IMR-90 (cell line): ENCODE measurements at regions of chr1 and their contacts with region 1.

Region 1: DNA sequence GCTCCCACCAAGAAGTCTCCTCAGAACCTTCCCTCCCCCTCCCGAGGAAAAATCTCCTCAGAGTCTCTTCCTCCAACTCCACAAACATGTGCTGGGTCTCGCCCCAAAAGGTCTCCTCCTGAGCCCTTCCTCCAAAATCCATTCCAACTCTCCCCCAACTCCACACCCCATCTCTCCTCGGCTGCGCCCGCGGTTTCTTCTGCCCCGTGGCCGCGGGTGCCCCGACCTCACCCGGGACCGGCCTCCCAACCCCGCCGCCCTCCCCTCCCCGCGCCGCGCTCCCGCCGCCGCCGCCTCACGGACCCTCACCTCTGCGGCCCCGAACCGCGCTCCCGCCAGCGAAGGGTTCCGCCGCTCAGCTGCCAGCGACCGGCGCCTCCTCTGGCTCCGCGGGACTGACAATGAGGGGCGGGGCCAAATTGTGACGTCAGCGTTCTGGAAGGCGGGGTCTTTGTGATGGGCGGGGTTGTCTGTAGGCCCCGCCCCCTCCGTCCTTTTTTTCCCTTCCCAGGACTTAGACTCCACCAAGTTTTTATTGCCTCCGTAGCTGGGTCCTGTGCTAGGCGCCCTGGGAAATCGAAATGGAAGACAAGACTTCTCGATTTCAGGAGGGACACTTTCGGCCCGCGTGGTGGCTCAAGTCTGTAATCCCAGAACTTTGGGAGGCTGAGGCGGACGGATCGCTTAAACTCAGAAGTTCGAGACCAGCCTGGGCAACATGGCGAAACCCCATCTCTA is at the start of gene LUZP1:
- DNase-seq: peak; percentile 86
- ATAC-seq: peak; percentile 81
- H3K4me3 ChIP-seq: peak within 1 kb of the TSS; percentile 93
- H3K27ac ChIP-seq: peak within 1 kb of the TSS; percentile 97
- H3K4me1 ChIP-seq: peaks cover 7% of the 10 kb centered on the region
- H3K27me3 ChIP-seq: no peaks in the 10 kb centered on the region
- CTCF ChIP-seq: 0 out of 2 replicates have a peak, but pooled peaks have one; percentile 2
- POLR2A ChIP-seq: peak; percentile 96
- RAD21 ChIP-seq: no peak
- total RNA-seq, gene LUZP1: 31.7 and 36.1 TPM in 2 replicates

Region 2: DNA sequence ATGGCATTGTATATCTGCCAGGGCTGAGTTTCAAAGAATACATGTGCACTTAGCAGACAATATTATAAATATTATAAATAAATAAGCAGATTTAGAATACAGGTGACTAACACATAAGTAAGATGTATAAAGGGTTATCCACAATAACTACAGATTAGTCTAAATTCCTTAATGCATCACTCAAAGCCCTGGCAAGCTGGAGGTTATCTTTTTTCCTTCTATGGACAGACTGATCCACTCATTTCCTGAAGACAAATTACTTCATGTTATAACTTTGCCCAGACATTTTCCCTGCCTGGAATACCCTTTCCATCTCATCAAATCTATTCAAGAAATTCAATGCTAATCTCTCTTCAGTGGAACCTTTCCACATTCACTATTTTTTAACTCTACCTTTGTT is 38.8 kb before region 1 on chr1:
- CTCF ChIA-PET with region 1: no interaction called
- POLR2A ChIA-PET with region 1: no interaction called
- dilution Hi-C with region 1: no loop called
- in situ Hi-C with region 1: no loop called
- intact Hi-C with region 1: loop called (anchors 2 kb)
- DNase-seq: no peak
- ATAC-seq: no peak
- H3K4me3 ChIP-seq: no peak overlapping the region
- H3K27ac ChIP-seq: no peak overlapping the region
- H3K4me1 ChIP-seq: peaks cover 10% of the 10 kb centered on the region; the same call in 1 of the 2 replicates
- H3K27me3 ChIP-seq: no peaks in the 10 kb centered on the region
- CTCF ChIP-seq: no peak
- POLR2A ChIP-seq: no peak
- RAD21 ChIP-seq: no peak